ENCODE measurements at regions of chr6 and their contacts with region 1.

Region 1: GRCh38 chr6:36027501-36028087 is at the start of gene MAPK14:
- DNase-seq: peak; percentile 98
- CTCF ChIP-seq: peak; percentile 96

Region 2: DNA sequence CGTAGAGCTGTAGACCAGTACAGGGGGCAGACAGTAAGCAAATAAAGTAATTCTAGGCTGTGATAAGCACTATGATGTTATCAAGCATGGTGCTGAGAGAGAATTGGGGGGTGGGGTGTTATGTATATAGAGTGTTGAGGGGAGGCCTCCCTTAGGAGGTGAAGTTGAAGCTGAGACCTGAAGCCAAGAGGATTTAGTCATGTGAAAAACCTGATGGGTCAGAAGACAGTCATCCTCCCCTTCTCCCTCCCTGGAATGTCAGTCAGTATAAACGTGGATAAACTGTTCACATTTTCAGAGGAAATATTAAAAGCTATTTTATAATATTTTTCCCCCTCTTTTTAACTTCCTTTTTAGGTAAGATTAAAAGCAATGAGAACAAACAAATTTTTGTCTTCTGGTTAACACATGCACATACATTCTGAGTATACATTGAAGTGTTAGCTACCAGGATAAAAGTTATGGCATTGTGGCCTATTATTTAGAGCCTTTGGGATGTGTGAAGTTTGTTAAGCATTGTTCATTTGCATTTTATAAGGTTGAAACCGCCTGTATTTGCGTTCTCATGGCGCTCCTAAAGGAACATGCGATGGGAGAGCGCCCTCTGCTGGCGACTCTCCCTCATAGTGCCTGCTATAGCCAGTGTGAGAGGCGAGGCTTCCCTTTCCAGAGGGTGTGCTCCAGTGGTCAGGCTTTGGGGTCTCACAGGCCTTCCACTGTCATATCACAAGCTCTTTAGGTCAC is 67.3 kb after region 1 on chr6:
- in situ Hi-C with region 1: loop called (anchors 5 kb)
- DNase-seq: peak; percentile 68
- CTCF ChIP-seq: peak; percentile 92

Region 3: DNA sequence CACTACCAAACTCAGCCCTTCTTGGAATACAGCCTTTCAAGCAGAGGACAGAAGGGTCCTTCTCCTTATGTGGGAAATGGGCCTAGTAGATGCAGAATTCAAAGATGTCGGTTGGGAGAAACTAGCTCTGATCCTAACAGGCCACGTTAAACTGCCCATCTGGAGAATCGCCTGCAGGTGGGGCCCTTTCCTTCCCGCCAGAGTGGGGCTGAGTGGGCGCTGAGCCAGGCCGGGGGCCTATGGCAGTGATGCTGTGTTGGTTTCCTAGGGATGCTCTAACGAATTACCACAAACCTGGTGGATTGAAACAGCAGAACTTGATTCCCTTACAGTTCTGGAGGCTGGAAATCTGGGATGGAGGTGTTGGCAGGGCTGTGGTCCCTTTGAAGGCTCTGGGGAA is 111.8 kb after region 1 on chr6:
- in situ Hi-C with region 1: no loop called
- DNase-seq: peak; percentile 35
- CTCF ChIP-seq: peak; percentile 12

Region 4: DNA sequence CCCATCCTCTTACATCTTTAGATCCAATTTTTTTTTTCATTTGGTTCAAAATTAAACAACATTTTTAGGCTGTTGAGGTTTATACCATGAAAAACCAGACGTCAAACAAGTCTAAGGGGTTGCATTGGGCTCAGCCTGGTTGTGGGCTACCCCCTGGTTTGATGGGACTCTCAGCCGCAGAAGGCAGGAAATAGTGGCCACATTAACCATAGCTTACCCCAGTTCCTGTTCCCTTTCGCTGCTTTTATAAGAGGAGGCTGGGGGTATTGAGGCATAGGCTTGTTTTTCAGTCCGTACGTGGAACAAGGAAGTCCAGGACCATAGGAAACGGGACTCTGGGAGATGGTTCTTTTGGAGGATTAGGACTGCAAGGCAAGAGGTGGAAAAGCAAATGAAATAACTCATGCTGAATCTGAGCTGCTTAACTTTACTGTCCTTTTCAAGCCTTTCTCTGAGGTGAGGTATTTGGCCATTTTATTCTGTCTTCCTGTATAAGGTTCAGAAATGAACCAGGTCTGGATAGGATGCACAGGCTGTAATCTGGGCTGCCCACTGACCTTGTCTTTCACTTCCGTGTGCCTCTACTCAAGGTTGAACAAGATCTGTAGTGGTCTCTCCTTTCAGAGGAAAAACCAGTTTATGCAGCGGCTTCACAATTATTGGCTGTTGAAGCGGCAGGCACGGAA is 176.6 kb after region 1 on chr6:
- in situ Hi-C with region 1: loop called (anchors 10 kb)
- DNase-seq: peak; percentile 47
- CTCF ChIP-seq: no peak